ENCODE measurements at regions of chr15 and their contacts with region 1.

Region 1: DNA sequence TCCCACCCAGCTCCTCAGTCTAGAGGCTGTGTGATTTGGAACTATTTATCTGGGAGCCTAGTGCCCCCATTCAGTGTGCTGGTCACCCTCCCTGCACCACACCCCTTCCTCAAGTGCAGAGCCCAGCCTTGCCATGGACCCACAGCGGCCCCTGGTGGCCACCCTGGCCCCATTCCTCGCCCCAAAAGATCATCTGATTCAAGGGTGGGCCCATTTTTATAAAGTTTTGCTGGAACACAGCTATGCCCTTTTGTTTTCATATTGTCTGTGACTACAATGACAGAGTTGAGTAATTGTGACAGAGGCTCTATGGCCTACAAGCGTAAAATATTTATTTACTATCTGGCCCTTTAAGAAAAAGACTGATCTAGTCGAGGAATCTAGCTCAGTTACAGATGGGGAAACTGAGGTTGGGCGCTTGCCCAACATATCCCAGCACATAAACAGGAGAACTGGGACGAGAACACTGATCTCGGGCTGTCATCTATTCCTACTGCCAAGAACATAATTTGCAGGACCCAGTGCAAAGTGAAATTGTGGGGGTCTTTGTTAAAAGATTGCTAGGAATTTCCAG is 1.8 kb downstream of the FES start:
- DNase-seq: peak; percentile 65 to 69 (median 66)
- H3K4me3 ChIP-seq: no peak overlapping the region
- H3K4me3 Mint-ChIP-seq: peak overlapping the region in 2 of 8 donors; percentile 52 to 77
- H3K27ac ChIP-seq: no peak overlapping the region
- H3K27ac Mint-ChIP-seq: peak overlapping the region in 3 of 7 donors; percentile 30 to 72 (median 60)
- H3K4me1 ChIP-seq: peaks cover 5% of the 10 kb centered on the region
- H3K4me1 Mint-ChIP-seq: peaks cover 2 to 17% (median 8%) of the 10 kb centered on the region in 4 donors
- H3K27me3 ChIP-seq: no peaks in the 10 kb centered on the region
- H3K27me3 Mint-ChIP-seq: peaks cover 5 to 9% of the 10 kb centered on the region in 2 donors

Region 2: GRCh38 chr15:90221246-90221900 is 664.8 kb before region 1 on chr15:
- CTCF ChIA-PET with region 1: no interaction called
- POLR2A ChIA-PET with region 1: no interaction called
- intact Hi-C with region 1: no loop called
- DNase-seq: no peak
- H3K4me3 ChIP-seq: no peak overlapping the region
- H3K4me3 Mint-ChIP-seq: no peak overlapping the region
- H3K27ac ChIP-seq: no peak overlapping the region
- H3K27ac Mint-ChIP-seq: no peak overlapping the region
- H3K4me1 ChIP-seq: no peaks in the 10 kb centered on the region
- H3K4me1 Mint-ChIP-seq: peaks cover 6 to 13% (median 8%) of the 10 kb centered on the region in 4 donors
- H3K27me3 ChIP-seq: no peaks in the 10 kb centered on the region
- H3K27me3 Mint-ChIP-seq: no peaks in the 10 kb centered on the region

Region 3: GRCh38 chr15:90362936-90363212 is 523.3 kb before region 1 on chr15:
- CTCF ChIA-PET with region 1: no interaction called
- POLR2A ChIA-PET with region 1: no interaction called
- intact Hi-C with region 1: loop called (anchors 1 kb)
- DNase-seq: no peak
- H3K4me3 ChIP-seq: no peak overlapping the region
- H3K4me3 Mint-ChIP-seq: no peak overlapping the region
- H3K27ac ChIP-seq: no peak overlapping the region
- H3K27ac Mint-ChIP-seq: no peak overlapping the region
- H3K4me1 ChIP-seq: peaks cover 15% of the 10 kb centered on the region
- H3K4me1 Mint-ChIP-seq: peaks cover 15 to 28% (median 22%) of the 10 kb centered on the region in 4 donors
- H3K27me3 ChIP-seq: no peaks in the 10 kb centered on the region
- H3K27me3 Mint-ChIP-seq: no peaks in the 10 kb centered on the region

Region 4: GRCh38 chr15:90660195-90660998 is 225.7 kb before region 1 on chr15:
- CTCF ChIA-PET with region 1: interaction called, 19 read pairs
- POLR2A ChIA-PET with region 1: no interaction called
- intact Hi-C with region 1: no loop called
- DNase-seq: peak; percentile 28 to 75 (median 32)
- H3K4me3 ChIP-seq: peak overlapping the region in 1 of 2 donors; percentile 33
- H3K4me3 Mint-ChIP-seq: peak overlapping the region; percentile 47 to 90 (median 79)
- H3K27ac ChIP-seq: no peak overlapping the region
- H3K27ac Mint-ChIP-seq: peak overlapping the region in 4 of 7 donors; percentile 16 to 84 (median 41)
- H3K4me1 ChIP-seq: peaks cover 61% of the 10 kb centered on the region
- H3K4me1 Mint-ChIP-seq: peaks cover 52 to 75% (median 62%) of the 10 kb centered on the region in 4 donors
- H3K27me3 ChIP-seq: peaks cover 12% of the 10 kb centered on the region
- H3K27me3 Mint-ChIP-seq: peaks cover 26 to 37% of the 10 kb centered on the region in 2 donors

Region 5: DNA sequence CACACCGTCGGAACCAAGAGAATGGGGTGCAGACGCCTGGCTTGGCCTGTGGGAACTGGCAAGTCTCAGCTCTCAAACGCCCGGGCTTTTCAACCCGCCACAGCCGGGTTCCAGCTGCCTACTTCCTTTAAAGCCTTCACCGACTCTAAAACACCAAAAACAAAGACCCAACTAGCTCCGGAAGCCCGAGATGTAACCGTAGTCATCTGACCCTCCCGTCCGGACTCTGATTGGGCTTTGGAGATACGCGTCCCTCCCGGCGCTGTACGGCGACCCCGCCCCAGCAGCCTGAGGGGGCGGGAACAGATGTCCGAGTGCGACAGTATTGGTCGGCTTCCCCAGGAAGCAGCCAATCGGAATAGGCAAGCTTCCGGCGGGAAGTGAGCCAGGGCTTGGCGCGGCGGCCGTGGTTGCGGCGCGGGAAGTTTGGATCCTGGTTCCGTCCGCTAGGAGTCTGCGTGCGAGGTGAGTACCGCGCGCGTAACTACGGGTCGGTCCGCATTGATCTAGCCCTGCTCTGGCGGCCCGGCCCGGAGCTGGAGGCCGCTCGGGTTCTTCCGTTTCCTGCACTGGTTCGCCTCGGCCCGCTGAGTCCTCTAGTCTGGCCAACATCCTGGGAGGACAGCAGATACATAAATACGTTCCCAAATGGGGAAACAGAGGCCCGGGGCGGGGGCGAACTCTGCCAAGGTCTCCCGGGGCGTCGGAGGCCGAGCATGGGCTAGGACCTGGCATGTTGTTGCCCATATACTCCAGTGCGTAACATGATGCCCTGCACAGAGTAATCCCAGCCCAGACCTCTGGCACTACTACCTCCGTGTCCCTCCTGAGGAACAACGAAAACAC is 168.9 kb before region 1 on chr15 and contains the start of gene BLM:
- CTCF ChIA-PET with region 1: interaction called, 12 read pairs
- POLR2A ChIA-PET with region 1: no interaction called
- intact Hi-C with region 1: no loop called
- DNase-seq: peak; percentile 96 to 97 (median 97)
- H3K4me3 ChIP-seq: peak within 1 kb of the TSS; percentile 81 to 95
- H3K4me3 Mint-ChIP-seq: peak within 1 kb of the TSS; percentile 95 to 99 (median 98)
- H3K27ac ChIP-seq: peak within 1 kb of the TSS; percentile 82
- H3K27ac Mint-ChIP-seq: peak within 1 kb of the TSS; percentile 93 to 97 (median 95)
- H3K4me1 ChIP-seq: peaks cover 19% of the 10 kb centered on the region
- H3K4me1 Mint-ChIP-seq: peaks cover 16 to 31% (median 25%) of the 10 kb centered on the region in 4 donors
- H3K27me3 ChIP-seq: no peaks in the 10 kb centered on the region
- H3K27me3 Mint-ChIP-seq: no peaks in the 10 kb centered on the region
- total RNA-seq, gene BLM: 6.5 to 8.9 TPM

Region 6: DNA sequence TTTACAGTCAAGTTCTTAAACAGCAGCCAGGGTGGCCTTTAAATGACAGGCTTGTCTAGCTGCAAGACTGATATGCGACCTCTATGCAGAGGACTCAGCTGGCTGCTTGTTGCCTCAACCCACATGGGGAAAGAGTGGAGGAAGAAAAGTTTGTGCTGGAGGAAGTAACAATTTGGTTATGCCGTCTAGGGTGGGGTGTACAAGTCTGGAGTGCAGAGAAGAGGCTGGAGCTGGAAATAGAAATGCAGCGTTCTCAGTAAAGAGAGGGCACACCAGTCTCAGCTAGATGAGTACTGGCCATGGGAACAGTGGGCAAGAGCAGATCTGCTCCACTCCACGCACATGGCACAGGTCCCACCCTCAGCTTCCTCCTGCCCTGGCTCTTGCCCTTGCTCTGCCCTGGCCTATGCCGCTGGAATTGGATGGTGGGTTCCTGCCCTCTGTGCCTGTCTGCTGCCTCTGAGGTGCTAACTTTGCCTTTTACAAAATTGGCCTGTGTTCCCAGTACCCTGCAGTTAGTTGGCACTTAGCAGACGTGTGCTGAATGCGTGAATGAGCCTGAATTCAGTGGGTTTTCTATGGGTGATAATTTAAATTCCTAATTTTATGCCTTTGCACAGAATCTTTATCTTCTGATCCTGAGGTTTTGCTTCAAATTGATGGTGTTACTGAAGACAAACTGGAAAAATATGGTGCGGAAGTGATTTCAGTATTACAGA is 77.5 kb before region 1 on chr15:
- CTCF ChIA-PET with region 1: interaction called, 10 read pairs
- POLR2A ChIA-PET with region 1: no interaction called
- intact Hi-C with region 1: no loop called
- DNase-seq: no peak
- H3K4me3 ChIP-seq: no peak overlapping the region
- H3K4me3 Mint-ChIP-seq: peak overlapping the region in 1 of 8 donors; percentile 21
- H3K27ac ChIP-seq: no peak overlapping the region
- H3K27ac Mint-ChIP-seq: peak overlapping the region in 2 of 7 donors; percentile 25 to 29
- H3K4me1 ChIP-seq: peaks cover 6% of the 10 kb centered on the region
- H3K4me1 Mint-ChIP-seq: peaks cover 11 to 15% (median 12%) of the 10 kb centered on the region in 4 donors
- H3K27me3 ChIP-seq: no peaks in the 10 kb centered on the region
- H3K27me3 Mint-ChIP-seq: no peaks in the 10 kb centered on the region

Region 7: GRCh38 chr15:90902040-90902839 is 16.1 kb after region 1 on chr15:
- CTCF ChIA-PET with region 1: interaction called, 39 read pairs
- POLR2A ChIA-PET with region 1: interaction called, 9 read pairs
- intact Hi-C with region 1: loop called (anchors 1 kb)
- DNase-seq: peak; percentile 73 to 79 (median 75)
- H3K4me3 ChIP-seq: peak overlapping the region; percentile 61 to 80
- H3K4me3 Mint-ChIP-seq: peak overlapping the region; percentile 76 to 95 (median 92)
- H3K27ac ChIP-seq: peak overlapping the region; percentile 68
- H3K27ac Mint-ChIP-seq: peak overlapping the region; percentile 85 to 96 (median 94)
- H3K4me1 ChIP-seq: peaks cover 16% of the 10 kb centered on the region
- H3K4me1 Mint-ChIP-seq: peaks cover 10 to 38% (median 26%) of the 10 kb centered on the region in 4 donors
- H3K27me3 ChIP-seq: no peaks in the 10 kb centered on the region
- H3K27me3 Mint-ChIP-seq: no peaks in the 10 kb centered on the region

Region 8: DNA sequence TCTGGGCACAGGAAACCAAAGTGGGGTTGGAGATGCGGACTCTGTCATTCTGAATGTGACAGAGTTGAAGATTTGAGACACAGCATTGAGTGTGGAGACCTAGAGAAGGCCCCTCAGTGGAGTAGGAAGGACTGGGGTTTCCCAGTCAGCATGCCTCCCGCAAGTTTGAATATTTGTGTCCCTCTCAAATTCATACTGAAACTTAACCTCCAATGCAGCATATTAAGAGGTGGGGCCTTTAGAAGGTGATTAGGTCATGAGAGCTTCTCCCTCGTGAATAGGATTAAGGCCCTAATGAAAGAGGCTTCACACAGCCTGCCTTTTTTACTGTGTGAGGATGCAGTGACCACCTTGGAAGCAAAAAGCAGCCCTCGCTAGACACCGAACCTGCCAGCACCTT is 38.2 kb after region 1 on chr15:
- CTCF ChIA-PET with region 1: no interaction called
- POLR2A ChIA-PET with region 1: no interaction called
- intact Hi-C with region 1: no loop called
- DNase-seq: no peak
- H3K4me3 ChIP-seq: no peak overlapping the region
- H3K4me3 Mint-ChIP-seq: no peak overlapping the region
- H3K27ac ChIP-seq: no peak overlapping the region
- H3K27ac Mint-ChIP-seq: peak overlapping the region in 4 of 7 donors; percentile 37 to 61 (median 46)
- H3K4me1 ChIP-seq: peaks cover 6% of the 10 kb centered on the region
- H3K4me1 Mint-ChIP-seq: peaks cover 2 to 8% (median 6%) of the 10 kb centered on the region in 4 donors
- H3K27me3 ChIP-seq: no peaks in the 10 kb centered on the region
- H3K27me3 Mint-ChIP-seq: no peaks in the 10 kb centered on the region

Region 9: GRCh38 chr15:91243820-91244219 is 357.7 kb after region 1 on chr15:
- CTCF ChIA-PET with region 1: no interaction called
- POLR2A ChIA-PET with region 1: no interaction called
- intact Hi-C with region 1: no loop called
- DNase-seq: no peak
- H3K4me3 ChIP-seq: no peak overlapping the region
- H3K4me3 Mint-ChIP-seq: no peak overlapping the region
- H3K27ac ChIP-seq: no peak overlapping the region
- H3K27ac Mint-ChIP-seq: no peak overlapping the region
- H3K4me1 ChIP-seq: no peaks in the 10 kb centered on the region
- H3K4me1 Mint-ChIP-seq: no peaks in the 10 kb centered on the region
- H3K27me3 ChIP-seq: no peaks in the 10 kb centered on the region
- H3K27me3 Mint-ChIP-seq: peaks cover 10 to 17% of the 10 kb centered on the region in 2 donors

Measured in CD4-positive, alpha-beta memory T cell (primary cell).